B cell (primary cell): ENCODE measurements at regions of chr13 and their contacts with region 1.

Region 1: GRCh38 chr13:26221721-26222519 is at the start of gene RNF6:
- DNase-seq: peak; percentile 94
- ATAC-seq: peak; percentile 94
- H3K4me3 ChIP-seq: peak within 1 kb of the TSS; percentile 86 to 99 (median 99)
- H3K4me3 Mint-ChIP-seq: peak within 1 kb of the TSS; percentile 95
- H3K27ac ChIP-seq: peak within 1 kb of the TSS; percentile 94 to 95
- H3K27ac Mint-ChIP-seq: peak within 1 kb of the TSS; percentile 100
- H3K4me1 ChIP-seq: peaks cover 16 to 23% of the 10 kb centered on the region in 2 donors
- H3K4me1 Mint-ChIP-seq: peaks cover 30% of the 10 kb centered on the region
- H3K27me3 ChIP-seq: no peaks in the 10 kb centered on the region
- H3K27me3 Mint-ChIP-seq: no peaks in the 10 kb centered on the region
- CTCF ChIP-seq: no peak
- total RNA-seq, gene RNF6: 46.8 and 52.4 TPM in 2 replicates

Region 2: DNA sequence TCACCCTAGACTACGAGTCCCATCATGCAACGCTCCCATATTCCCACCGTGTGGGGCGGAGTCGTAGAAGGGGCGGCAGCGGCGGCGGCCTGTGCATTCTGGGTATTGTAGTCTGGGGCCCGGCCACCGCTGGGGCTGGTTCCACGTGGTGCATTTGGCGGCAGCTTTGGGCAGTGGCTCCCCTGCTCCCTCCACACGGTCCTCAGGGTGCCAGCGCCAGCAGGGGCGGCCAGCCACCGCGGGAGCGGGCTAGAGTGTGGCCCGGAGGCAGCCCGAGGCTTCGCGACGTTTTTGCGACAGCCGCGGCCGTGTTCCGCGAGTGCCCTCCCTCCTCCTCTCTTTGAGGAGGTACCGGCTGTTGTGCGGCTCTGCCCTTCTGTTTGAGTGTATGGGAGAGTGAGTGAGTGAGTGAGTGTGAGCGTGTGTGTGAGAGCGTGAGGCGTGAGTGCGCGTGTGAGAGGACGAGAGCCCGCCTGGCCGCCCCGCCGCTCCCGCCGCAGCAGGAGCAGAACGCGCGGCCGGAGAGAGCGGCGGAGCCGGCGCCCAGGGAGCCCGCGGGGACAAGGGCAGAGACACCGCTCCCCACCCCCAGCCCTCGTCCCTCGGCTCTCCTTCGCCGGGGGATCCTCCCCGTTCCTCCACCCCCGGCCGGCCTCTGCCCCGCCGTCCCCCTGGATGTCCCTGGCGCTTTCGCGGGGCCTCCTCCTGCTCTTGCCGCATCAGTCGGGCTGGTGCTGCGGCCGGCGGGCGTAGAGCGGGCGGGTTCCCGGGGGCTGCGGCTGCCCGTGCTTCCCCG is 32.1 kb after region 1 on chr13 and contains the start of gene CDK8:
- CTCF ChIA-PET with region 1: no interaction called
- POLR2A ChIA-PET with region 1: interaction called, 3 read pairs
- intact Hi-C with region 1: loop called (anchors 1 kb)
- DNase-seq: peak; percentile 97
- ATAC-seq: peak; percentile 86
- H3K4me3 ChIP-seq: peak within 1 kb of the TSS; percentile 66 to 98 (median 77)
- H3K4me3 Mint-ChIP-seq: peak within 1 kb of the TSS; percentile 83
- H3K27ac ChIP-seq: peak within 1 kb of the TSS; percentile 72 to 80
- H3K27ac Mint-ChIP-seq: peak within 1 kb of the TSS; percentile 81
- H3K4me1 ChIP-seq: peaks cover 14 to 17% of the 10 kb centered on the region in 2 donors
- H3K4me1 Mint-ChIP-seq: peaks cover 29% of the 10 kb centered on the region
- H3K27me3 ChIP-seq: peaks cover 0 to 4% (median 2%) of the 10 kb centered on the region in 4 experiments
- H3K27me3 Mint-ChIP-seq: peaks cover 8% of the 10 kb centered on the region
- CTCF ChIP-seq: no peak
- total RNA-seq, gene CDK8: 13.5 TPM in 2 replicates

Region 3: GRCh38 chr13:26785838-26786630 is 564.1 kb after region 1 on chr13:
- CTCF ChIA-PET with region 1: interaction called, 3 read pairs
- POLR2A ChIA-PET with region 1: no interaction called
- intact Hi-C with region 1: loop called (anchors 10 kb)
- DNase-seq: peak; percentile 77
- ATAC-seq: peak; percentile 62
- H3K4me3 ChIP-seq: peak overlapping the region; percentile 51 to 77 (median 64)
- H3K4me3 Mint-ChIP-seq: peak overlapping the region; percentile 93
- H3K27ac ChIP-seq: peak overlapping the region; percentile 68 to 87
- H3K27ac Mint-ChIP-seq: peak overlapping the region; percentile 90
- H3K4me1 ChIP-seq: peaks cover 15 to 23% of the 10 kb centered on the region in 2 donors
- H3K4me1 Mint-ChIP-seq: peaks cover 23% of the 10 kb centered on the region
- H3K27me3 ChIP-seq: peaks cover 0 to 5% (median 3%) of the 10 kb centered on the region in 4 experiments
- H3K27me3 Mint-ChIP-seq: peaks cover 12% of the 10 kb centered on the region
- CTCF ChIP-seq: no peak